Activated T-helper 1 cell treated with anti-CD3 and anti-CD28 coated beads, Interleukin-12 subunit alpha, Interleukin-12 subunit beta, Interleukin-2, Interleukin-4 antibody, amounts not matched to agents 30 ng/mL and 10 ng/mL and 1 ng/mL, durations not matched to agents 14 hours and 24 hours and 36 hours (primary cell): ENCODE measurements at regions of chr17 and their contacts with region 1.

Region 1: GRCh38 chr17:3602499-3602898 is 6.7 kb downstream of the TRPV1 start:
- DNase-seq: no peak
- H3K4me3 Mint-ChIP-seq: no peak overlapping the region
- H3K27ac Mint-ChIP-seq: no peak overlapping the region
- H3K4me1 Mint-ChIP-seq: no peaks in the 10 kb centered on the region
- H3K27me3 Mint-ChIP-seq: no peaks in the 10 kb centered on the region

Region 2: DNA sequence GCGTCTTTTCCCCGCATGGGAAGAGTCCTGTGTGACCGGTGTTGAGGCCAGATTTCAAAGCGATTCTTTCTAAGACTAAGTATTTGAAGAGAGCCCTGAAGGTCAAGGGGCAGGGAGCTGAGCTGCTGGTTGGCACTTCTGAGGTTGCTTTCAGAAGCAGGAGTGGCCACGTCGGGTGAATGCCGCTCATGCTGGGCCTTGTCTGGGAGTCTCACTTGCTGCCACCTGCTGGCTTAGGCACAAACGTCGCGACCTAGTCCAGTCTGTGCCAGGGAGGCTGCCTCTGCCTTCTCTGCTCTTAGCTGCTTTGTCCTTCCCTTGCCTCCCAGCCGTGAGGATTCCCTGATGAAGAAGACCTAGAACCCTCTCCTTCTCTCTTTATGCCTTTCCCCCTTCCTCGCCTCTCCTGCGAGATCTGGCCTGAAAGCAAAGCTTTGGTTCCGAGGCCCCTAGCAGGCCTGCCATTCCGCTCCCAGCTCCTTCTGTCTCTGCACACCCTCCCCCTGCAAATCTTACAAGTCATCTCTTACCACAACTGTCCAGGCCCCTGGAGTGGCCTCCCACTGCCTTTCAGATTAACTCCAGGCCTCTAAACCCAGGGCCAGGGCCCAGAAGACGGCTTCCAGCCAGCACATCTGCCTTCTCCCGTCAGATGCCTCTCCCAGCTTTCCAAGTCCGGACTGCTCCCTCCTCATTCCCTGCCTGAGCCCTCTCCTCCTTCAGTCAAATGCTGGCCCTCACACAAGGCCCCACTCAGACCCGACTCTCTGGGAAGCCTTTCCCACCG is 45.5 kb after region 1 on chr17:
- intact Hi-C with region 1: loop called (anchors 1 kb)
- DNase-seq: no peak
- H3K4me3 Mint-ChIP-seq: no peak overlapping the region
- H3K27ac Mint-ChIP-seq: no peak overlapping the region
- H3K4me1 Mint-ChIP-seq: peaks cover 16% of the 10 kb centered on the region
- H3K27me3 Mint-ChIP-seq: no peaks in the 10 kb centered on the region